MCF 10A (cell line): ENCODE measurements at regions of chr6 and their contacts with region 1.

Region 1: GRCh38 chr6:109526905-109527628 is 44.0 kb upstream of the ZBTB24 start:
- DNase-seq: peak; percentile 80
- H3K4me3 Mint-ChIP-seq: no peak overlapping the region
- H3K27ac Mint-ChIP-seq: no peak overlapping the region
- H3K4me1 Mint-ChIP-seq: peaks cover 6% of the 10 kb centered on the region
- H3K27me3 Mint-ChIP-seq: peaks cover 2% of the 10 kb centered on the region
- CTCF ChIP-seq: peak; percentile 70

Region 2: GRCh38 chr6:109336221-109336961 is 190.7 kb before region 1 on chr6:
- CTCF ChIA-PET with region 1: no interaction called
- POLR2A ChIA-PET with region 1: no interaction called
- intact Hi-C with region 1: no loop called
- DNase-seq: peak; percentile 89
- H3K4me3 Mint-ChIP-seq: no peak overlapping the region
- H3K27ac Mint-ChIP-seq: peak overlapping the region; percentile 7
- H3K4me1 Mint-ChIP-seq: peaks cover 13% of the 10 kb centered on the region
- H3K27me3 Mint-ChIP-seq: no peaks in the 10 kb centered on the region
- CTCF ChIP-seq: no peak

Region 3: GRCh38 chr6:110053395-110054240 is 526.6 kb after region 1 on chr6:
- CTCF ChIA-PET with region 1: interaction called, 4 read pairs
- POLR2A ChIA-PET with region 1: no interaction called
- intact Hi-C with region 1: loop called (anchors 5 kb)
- DNase-seq: peak; percentile 71
- H3K4me3 Mint-ChIP-seq: no peak overlapping the region
- H3K27ac Mint-ChIP-seq: no peak overlapping the region
- H3K4me1 Mint-ChIP-seq: no peaks in the 10 kb centered on the region
- H3K27me3 Mint-ChIP-seq: peaks cover 11% of the 10 kb centered on the region
- CTCF ChIP-seq: peak; percentile 65